CD4-positive, alpha-beta T cell (primary cell): ENCODE measurements at regions of chr1 and their contacts with region 1.

Region 1: DNA sequence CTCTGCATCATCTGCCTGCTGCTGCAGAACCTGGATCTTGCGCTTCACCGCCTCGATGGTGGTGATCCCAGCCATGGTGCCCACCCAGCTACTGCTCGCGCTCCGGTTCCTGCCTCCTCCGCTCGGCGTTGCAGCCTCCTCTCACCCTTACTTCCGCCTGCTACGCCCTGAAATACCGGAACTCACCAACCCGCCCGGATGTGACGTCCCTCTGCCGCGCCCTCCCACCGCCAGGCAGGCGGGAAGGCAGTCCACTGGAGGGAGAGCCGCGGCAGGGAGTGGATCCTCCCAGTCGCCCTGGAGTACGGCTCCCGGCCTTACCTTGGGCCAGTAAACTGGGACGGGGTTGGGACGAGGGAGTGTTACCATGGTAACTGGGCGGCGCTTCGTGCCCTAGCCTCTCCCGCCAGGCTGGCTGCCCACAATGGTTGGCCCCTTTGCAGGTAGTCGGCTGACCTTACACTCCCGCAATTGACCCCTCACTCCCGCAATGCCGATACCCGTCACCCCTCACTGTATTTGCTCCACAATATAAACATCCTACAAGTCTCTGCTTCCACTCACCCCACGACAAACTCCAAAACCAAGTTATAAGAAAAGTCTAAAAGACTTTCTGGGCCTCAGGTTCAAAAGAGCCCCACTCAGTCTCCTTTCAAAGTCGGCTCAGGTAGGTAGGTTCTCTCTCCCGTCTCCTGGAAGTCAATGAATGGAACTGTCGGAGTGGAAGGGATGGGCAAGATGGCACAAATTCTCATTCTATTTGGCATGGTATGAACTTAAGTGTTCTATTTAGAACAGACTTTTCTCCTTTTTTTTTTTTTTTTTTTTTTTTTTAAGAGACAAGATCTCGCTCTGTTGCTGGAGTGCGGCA is 8.6 kb downstream of the TPM3 start:
- DNase-seq: peak; percentile 85 to 96 (median 92)
- ATAC-seq: peak; percentile 78
- H3K4me3 ChIP-seq: peak overlapping the region; percentile 88
- H3K4me3 Mint-ChIP-seq: peak overlapping the region; percentile 97
- H3K27ac ChIP-seq: peak overlapping the region; percentile 90 to 93
- H3K27ac Mint-ChIP-seq: peak overlapping the region; percentile 96
- H3K4me1 ChIP-seq: peaks cover 46% of the 10 kb centered on the region
- H3K4me1 Mint-ChIP-seq: peaks cover 54% of the 10 kb centered on the region
- H3K27me3 ChIP-seq: no peaks in the 10 kb centered on the region
- H3K27me3 Mint-ChIP-seq: peaks cover 5% of the 10 kb centered on the region
- CTCF ChIP-seq: no peak

Region 2: GRCh38 chr1:153515504-153516394 is 667.5 kb before region 1 on chr1:
- CTCF ChIA-PET with region 1: no interaction called
- POLR2A ChIA-PET with region 1: no interaction called
- intact Hi-C with region 1: no loop called
- DNase-seq: peak in 1 of 14 experiments; percentile 9
- ATAC-seq: no peak
- H3K4me3 ChIP-seq: no peak overlapping the region
- H3K4me3 Mint-ChIP-seq: no peak overlapping the region
- H3K27ac ChIP-seq: no peak overlapping the region
- H3K27ac Mint-ChIP-seq: no peak overlapping the region
- H3K4me1 ChIP-seq: peaks cover 18% of the 10 kb centered on the region
- H3K4me1 Mint-ChIP-seq: peaks cover 7% of the 10 kb centered on the region
- H3K27me3 ChIP-seq: no peaks in the 10 kb centered on the region
- H3K27me3 Mint-ChIP-seq: no peaks in the 10 kb centered on the region
- CTCF ChIP-seq: no peak

Region 3: GRCh38 chr1:154157520-154158306 is 25.6 kb before region 1 on chr1:
- CTCF ChIA-PET with region 1: no interaction called
- POLR2A ChIA-PET with region 1: interaction called, 41 read pairs
- intact Hi-C with region 1: loop called (anchors 1 kb)
- DNase-seq: peak; percentile 49 to 91 (median 65)
- ATAC-seq: peak; percentile 98
- H3K4me3 ChIP-seq: no peak overlapping the region
- H3K4me3 Mint-ChIP-seq: peak overlapping the region; percentile 74
- H3K27ac ChIP-seq: peak overlapping the region; percentile 55 to 68
- H3K27ac Mint-ChIP-seq: peak overlapping the region; percentile 92
- H3K4me1 ChIP-seq: peaks cover 53% of the 10 kb centered on the region
- H3K4me1 Mint-ChIP-seq: peaks cover 74% of the 10 kb centered on the region
- H3K27me3 ChIP-seq: no peaks in the 10 kb centered on the region
- H3K27me3 Mint-ChIP-seq: no peaks in the 10 kb centered on the region
- CTCF ChIP-seq: no peak